Activated CD4-positive, alpha-beta memory T cell treated with anti-CD3 and anti-CD28 coated beads for 36 hours (primary cell): ENCODE measurements at regions of chr5 and their contacts with region 1.

Region 1: DNA sequence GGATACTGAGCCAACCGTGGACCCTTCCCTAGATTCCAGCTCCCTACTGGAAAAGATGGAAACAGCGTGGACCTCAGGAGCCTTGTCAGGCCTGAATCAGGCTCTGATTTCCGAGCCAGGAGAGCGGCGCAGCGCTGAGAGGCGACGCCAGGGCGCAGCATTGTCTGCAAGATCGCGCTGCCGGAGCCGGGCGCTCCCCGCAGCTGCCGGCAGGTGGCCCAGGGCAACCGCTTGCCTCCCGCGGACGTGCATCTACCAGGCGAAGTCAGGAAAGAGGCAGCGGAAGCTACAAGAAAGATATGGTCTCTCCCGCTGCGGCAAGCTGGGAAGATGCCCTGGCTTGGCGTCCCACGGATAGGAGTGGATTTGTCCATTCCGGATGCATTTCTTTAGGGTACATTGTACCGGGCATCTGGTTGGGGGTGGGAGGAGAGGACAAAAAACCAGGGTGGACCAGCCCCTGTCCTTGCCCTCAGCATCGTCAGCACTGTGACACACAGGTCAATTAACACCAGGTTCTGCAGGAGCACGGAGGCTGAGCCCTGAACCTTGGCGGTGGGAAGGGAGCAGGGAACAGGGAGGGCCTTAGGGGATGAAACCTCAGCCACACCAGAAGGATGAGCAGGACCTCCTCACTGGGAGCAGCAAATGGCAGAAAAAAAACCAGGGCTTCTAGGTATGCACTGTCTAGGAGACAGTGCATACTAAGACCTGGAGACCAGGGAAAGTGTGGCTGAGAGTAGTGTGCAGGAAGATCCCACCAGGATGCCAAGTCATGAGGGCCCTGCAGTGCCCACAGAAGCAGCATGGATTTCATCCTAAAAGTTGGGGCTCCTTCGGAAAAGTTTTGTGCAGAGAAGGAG is 55.9 kb downstream of the SFXN1 start:
- DNase-seq: peak; percentile 91
- H3K4me3 Mint-ChIP-seq: peak overlapping the region; percentile 52
- H3K27ac Mint-ChIP-seq: peak overlapping the region; percentile 56
- H3K4me1 Mint-ChIP-seq: peaks cover 44% of the 10 kb centered on the region
- H3K27me3 Mint-ChIP-seq: no peaks in the 10 kb centered on the region

Region 2: GRCh38 chr5:175070283-175070682 is 464.0 kb before region 1 on chr5:
- CTCF ChIA-PET with region 1: no interaction called
- POLR2A ChIA-PET with region 1: no interaction called
- intact Hi-C with region 1: no loop called
- DNase-seq: no peak
- H3K4me3 Mint-ChIP-seq: no peak overlapping the region
- H3K27ac Mint-ChIP-seq: no peak overlapping the region
- H3K4me1 Mint-ChIP-seq: no peaks in the 10 kb centered on the region
- H3K27me3 Mint-ChIP-seq: peaks cover 2% of the 10 kb centered on the region

Region 3: GRCh38 chr5:175410926-175411325 is 123.4 kb before region 1 on chr5:
- CTCF ChIA-PET with region 1: no interaction called
- POLR2A ChIA-PET with region 1: no interaction called
- intact Hi-C with region 1: no loop called
- DNase-seq: no peak
- H3K4me3 Mint-ChIP-seq: no peak overlapping the region
- H3K27ac Mint-ChIP-seq: no peak overlapping the region
- H3K4me1 Mint-ChIP-seq: no peaks in the 10 kb centered on the region
- H3K27me3 Mint-ChIP-seq: peaks cover 14% of the 10 kb centered on the region

Region 4: DNA sequence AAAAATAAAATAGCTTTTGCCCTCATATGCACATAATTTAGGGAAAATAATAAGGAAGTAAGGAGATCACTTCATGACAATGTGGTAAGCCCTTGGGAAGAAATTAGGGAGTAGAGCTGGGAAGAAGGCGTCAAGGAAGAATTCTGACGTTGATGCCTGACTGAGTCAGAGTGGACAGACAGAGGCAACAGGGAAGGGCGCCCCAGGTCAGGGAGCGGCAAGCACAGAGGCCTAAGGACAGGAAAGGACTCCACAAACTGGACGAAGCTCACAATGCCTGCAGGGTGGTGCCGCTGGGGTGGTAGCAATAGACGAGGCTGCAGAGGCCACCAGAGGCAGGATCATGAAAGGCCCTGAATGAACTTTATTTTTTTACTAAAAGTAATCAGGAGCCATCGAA is 97.9 kb before region 1 on chr5:
- CTCF ChIA-PET with region 1: no interaction called
- POLR2A ChIA-PET with region 1: no interaction called
- intact Hi-C with region 1: no loop called
- DNase-seq: no peak
- H3K4me3 Mint-ChIP-seq: no peak overlapping the region
- H3K27ac Mint-ChIP-seq: no peak overlapping the region
- H3K4me1 Mint-ChIP-seq: no peaks in the 10 kb centered on the region
- H3K27me3 Mint-ChIP-seq: peaks cover 20% of the 10 kb centered on the region

Region 5: DNA sequence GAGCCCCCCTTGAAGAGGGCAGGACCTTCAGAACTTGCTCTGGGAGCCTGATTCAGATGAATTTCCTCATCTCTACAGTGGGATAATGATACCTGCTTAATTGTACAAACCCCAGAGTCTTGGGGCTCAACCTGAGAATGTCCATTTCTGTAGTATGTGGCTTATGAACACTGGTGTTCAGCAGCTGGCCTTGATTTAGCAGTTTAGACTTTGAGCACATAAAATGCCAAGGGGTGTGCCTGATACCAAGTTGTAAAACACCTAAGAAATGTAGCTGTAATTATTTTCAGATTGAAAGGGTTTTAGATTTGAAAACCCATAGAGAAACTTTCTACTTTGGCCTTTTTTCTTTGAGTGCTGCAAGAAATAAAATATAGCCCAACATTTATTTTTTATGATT is 11.0 kb before region 1 on chr5:
- CTCF ChIA-PET with region 1: interaction called, 41 read pairs
- POLR2A ChIA-PET with region 1: interaction called, 3 read pairs
- intact Hi-C with region 1: no loop called
- DNase-seq: no peak
- H3K4me3 Mint-ChIP-seq: peak overlapping the region; percentile 70
- H3K27ac Mint-ChIP-seq: peak overlapping the region; percentile 100
- H3K4me1 Mint-ChIP-seq: peaks cover 84% of the 10 kb centered on the region
- H3K27me3 Mint-ChIP-seq: no peaks in the 10 kb centered on the region

Region 6: GRCh38 chr5:175572886-175573285 is 38.6 kb after region 1 on chr5:
- CTCF ChIA-PET with region 1: interaction called, 26 read pairs
- POLR2A ChIA-PET with region 1: no interaction called
- intact Hi-C with region 1: loop called (anchors 1 kb)
- DNase-seq: no peak
- H3K4me3 Mint-ChIP-seq: no peak overlapping the region
- H3K27ac Mint-ChIP-seq: no peak overlapping the region
- H3K4me1 Mint-ChIP-seq: peaks cover 6% of the 10 kb centered on the region
- H3K27me3 Mint-ChIP-seq: peaks cover 5% of the 10 kb centered on the region

Region 7: GRCh38 chr5:175681045-175681967 is 147.0 kb after region 1 on chr5:
- CTCF ChIA-PET with region 1: interaction called, 19 read pairs
- POLR2A ChIA-PET with region 1: interaction called, 3 read pairs
- intact Hi-C with region 1: no loop called
- DNase-seq: no peak
- H3K4me3 Mint-ChIP-seq: no peak overlapping the region
- H3K27ac Mint-ChIP-seq: no peak overlapping the region
- H3K4me1 Mint-ChIP-seq: peaks cover 23% of the 10 kb centered on the region
- H3K27me3 Mint-ChIP-seq: no peaks in the 10 kb centered on the region

Region 8: GRCh38 chr5:175712681-175713085 is 178.4 kb after region 1 on chr5:
- CTCF ChIA-PET with region 1: interaction called, 179 read pairs
- POLR2A ChIA-PET with region 1: no interaction called
- intact Hi-C with region 1: no loop called
- DNase-seq: no peak
- H3K4me3 Mint-ChIP-seq: no peak overlapping the region
- H3K27ac Mint-ChIP-seq: no peak overlapping the region
- H3K4me1 Mint-ChIP-seq: peaks cover 12% of the 10 kb centered on the region
- H3K27me3 Mint-ChIP-seq: no peaks in the 10 kb centered on the region